GM12878 (cell line): ENCODE measurements at regions of chr17 and their contacts with region 1.

Region 1: DNA sequence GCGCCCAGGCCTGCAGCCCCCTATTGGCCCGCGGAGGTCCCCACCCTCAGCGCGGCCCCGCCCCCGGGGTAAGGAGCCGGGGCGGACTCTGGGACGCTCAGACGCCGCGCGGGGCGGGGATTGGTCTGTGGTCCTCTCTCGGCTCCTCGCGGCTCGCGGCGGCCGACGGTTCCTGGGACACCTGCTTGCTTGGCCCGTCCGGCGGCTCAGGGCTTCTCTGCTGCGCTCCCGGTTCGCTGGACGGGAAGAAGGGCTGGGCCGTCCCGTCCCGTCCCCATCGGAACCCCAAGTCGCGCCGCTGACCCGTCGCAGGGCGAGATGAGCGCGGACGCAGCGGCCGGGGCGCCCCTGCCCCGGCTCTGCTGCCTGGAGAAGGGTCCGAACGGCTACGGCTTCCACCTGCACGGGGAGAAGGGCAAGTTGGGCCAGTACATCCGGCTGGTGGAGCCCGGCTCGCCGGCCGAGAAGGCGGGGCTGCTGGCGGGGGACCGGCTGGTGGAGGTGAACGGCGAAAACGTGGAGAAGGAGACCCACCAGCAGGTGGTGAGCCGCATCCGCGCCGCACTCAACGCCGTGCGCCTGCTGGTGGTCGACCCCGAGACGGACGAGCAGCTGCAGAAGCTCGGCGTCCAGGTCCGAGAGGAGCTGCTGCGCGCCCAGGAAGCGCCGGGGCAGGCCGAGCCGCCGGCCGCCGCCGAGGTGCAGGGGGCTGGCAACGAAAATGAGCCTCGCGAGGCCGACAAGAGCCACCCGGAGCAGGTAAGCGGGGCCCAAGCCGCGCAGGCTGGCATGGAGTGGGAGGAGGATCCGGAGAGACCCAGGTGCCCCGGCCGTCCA is at the start of gene NHERF1:
- DNase-seq: peak; percentile 60
- ATAC-seq: peak; percentile 96
- H3K4me3 ChIP-seq: peak within 1 kb of the TSS; percentile 96
- H3K27ac ChIP-seq: peak within 1 kb of the TSS; percentile 64
- H3K4me1 ChIP-seq: peaks cover 6% of the 10 kb centered on the region
- H3K27me3 ChIP-seq: no peaks in the 10 kb centered on the region
- CTCF ChIP-seq: peak; percentile 10 to 19 (median 14); a peak in 1 of 6 replicates
- EP300 ChIP-seq: no peak
- POLR2A ChIP-seq: peak; percentile 99
- RAD21 ChIP-seq: no peak
- polyA plus RNA-seq, gene NHERF1: 13.4 to 14.3 TPM

Region 2: DNA sequence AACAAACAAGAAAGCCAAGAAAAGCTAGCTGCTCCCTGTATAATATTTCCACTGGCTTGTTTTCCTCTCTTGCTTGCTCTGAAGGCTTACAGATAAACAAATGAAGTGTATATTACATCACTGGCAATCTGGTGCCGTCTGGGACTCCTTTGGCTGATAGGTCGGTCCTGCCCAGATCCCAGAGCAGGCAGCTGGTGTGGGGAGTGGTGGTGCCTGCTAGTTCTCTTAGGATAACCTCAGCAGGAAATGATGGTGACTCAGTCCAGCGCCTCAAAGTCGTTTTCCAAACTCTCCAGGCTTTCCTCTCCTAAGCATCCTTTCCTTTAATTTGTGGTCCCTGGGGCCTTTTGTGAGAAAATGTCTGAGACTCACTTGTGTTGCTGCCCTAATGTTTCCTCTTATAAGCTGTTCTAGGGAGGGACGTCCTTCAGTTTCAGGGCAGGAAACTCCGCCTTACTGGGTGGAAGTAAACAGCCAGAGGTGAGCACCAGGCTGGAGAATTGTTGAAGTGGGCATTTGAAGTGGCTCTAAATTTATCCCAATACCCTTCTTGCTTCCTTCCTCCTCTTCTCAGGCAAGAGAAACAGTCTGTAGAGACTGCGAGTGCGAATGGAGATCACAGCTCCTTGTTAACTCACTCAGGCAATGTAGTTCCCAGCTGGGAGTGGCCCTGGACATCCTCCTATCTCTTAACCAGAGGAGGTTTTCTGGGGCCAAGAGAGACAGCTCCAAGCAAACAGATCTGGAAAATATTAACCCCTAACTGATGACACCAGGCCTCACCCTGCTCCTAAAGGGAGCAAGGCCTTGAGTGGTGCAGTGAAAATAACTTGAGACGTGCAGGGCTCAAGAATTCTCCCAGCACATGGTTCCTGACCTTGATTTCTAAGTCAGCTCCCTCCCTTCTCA is 70.9 kb before region 1 on chr17:
- CTCF ChIA-PET with region 1: no interaction called
- POLR2A ChIA-PET with region 1: no interaction called
- RAD21 ChIA-PET with region 1: no interaction called
- SMC1A ChIA-PET with region 1: no interaction called
- in situ Hi-C with region 1: no loop called
- intact Hi-C with region 1: no loop called
- DNase-seq: no peak
- ATAC-seq: no peak
- H3K4me3 ChIP-seq: no peak overlapping the region
- H3K27ac ChIP-seq: no peak overlapping the region
- H3K4me1 ChIP-seq: 0 out of 2 replicates have a peak, but pooled peaks cover 3% of the 10 kb centered on the region
- H3K27me3 ChIP-seq: peaks cover 0 to 4% of the 10 kb centered on the region in 2 experiments; a peak in 2 of 4 replicates
- CTCF ChIP-seq: no peak
- EP300 ChIP-seq: no peak
- POLR2A ChIP-seq: no peak
- RAD21 ChIP-seq: no peak

Region 3: GRCh38 chr17:74759243-74759801 is 10.6 kb after region 1 on chr17:
- CTCF ChIA-PET with region 1: interaction called, 33 read pairs
- POLR2A ChIA-PET with region 1: interaction called, 16 read pairs
- RAD21 ChIA-PET with region 1: interaction called, 11 read pairs
- SMC1A ChIA-PET with region 1: interaction called, 10 read pairs
- in situ Hi-C with region 1: no loop called
- intact Hi-C with region 1: no loop called
- DNase-seq: no peak
- ATAC-seq: peak; percentile 90
- H3K4me3 ChIP-seq: no peak overlapping the region
- H3K27ac ChIP-seq: peak overlapping the region; percentile 1
- H3K4me1 ChIP-seq: peaks cover 21% of the 10 kb centered on the region
- H3K27me3 ChIP-seq: no peaks in the 10 kb centered on the region
- CTCF ChIP-seq: peak; percentile 16 to 32 (median 30); a peak in 3 of 6 replicates
- EP300 ChIP-seq: no peak
- POLR2A ChIP-seq: no peak
- RAD21 ChIP-seq: peak; percentile 28

Region 4: GRCh38 chr17:74770498-74771318 is 22.0 kb after region 1 on chr17:
- CTCF ChIA-PET with region 1: interaction called, 60 read pairs
- POLR2A ChIA-PET with region 1: interaction called, 14 read pairs
- RAD21 ChIA-PET with region 1: interaction called, 30 read pairs
- SMC1A ChIA-PET with region 1: interaction called, 11 read pairs
- in situ Hi-C with region 1: no loop called
- intact Hi-C with region 1: no loop called
- DNase-seq: no peak
- ATAC-seq: peak; percentile 90
- H3K4me3 ChIP-seq: no peak overlapping the region
- H3K27ac ChIP-seq: no peak overlapping the region
- H3K4me1 ChIP-seq: 0 out of 2 replicates have a peak, but pooled peaks cover 3% of the 10 kb centered on the region
- H3K27me3 ChIP-seq: no peaks in the 10 kb centered on the region
- CTCF ChIP-seq: peak; percentile 81 to 85 (median 82)
- EP300 ChIP-seq: no peak
- POLR2A ChIP-seq: peak; percentile 33; the same call in 1 of the 2 replicates
- RAD21 ChIP-seq: peak; percentile 88

Region 5: DNA sequence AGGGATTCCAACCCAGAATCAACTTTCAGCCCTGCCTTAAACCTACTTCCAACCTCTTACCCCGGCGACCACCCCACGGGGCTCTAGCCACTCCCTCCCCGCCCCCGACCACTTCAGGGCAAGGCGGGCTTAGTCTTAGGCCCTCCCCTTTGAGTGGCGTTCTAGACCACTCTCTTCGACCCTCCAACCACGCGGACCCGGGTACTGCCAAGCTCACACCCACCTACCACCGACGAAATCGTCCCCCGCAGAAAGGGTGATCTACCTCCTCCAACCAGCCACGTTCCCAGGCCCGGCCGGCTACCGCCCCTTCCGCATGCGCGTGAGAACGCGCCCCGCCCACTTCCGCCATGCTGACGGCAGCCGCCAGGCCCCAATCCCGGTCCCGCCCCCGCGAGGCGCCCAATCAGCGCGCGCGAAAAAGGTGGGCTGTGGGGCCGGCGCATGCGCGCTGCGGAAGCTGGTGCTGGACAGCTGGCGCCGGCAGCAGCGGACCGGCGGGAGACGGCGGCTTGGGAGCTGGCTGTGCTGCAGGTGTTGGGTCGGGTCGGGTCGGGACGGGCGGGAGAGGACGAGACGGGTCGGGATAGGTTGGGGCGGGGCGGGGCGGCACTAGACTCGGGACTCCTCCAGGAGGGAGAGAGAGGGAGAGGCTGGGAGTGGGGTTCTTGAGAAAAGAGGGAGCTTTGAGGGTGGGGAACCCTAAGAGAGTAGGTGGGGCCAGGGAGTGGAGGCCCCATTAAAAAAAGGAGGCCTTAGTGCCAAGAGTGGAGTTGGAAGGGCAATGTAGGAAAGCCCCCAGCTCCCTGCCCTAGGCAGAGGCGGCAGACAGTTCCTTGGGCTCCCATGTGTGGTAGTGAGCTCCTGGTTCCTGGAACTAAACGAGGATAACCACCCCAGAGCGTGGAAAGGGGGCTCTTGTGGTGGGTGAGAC is 27.6 kb after region 1 on chr17 and contains the start of gene NAT9:
- CTCF ChIA-PET with region 1: interaction called, 60 read pairs
- POLR2A ChIA-PET with region 1: interaction called, 14 read pairs
- RAD21 ChIA-PET with region 1: interaction called, 30 read pairs
- SMC1A ChIA-PET with region 1: interaction called, 13 read pairs
- in situ Hi-C with region 1: no loop called
- intact Hi-C with region 1: loop called (anchors 2 kb)
- DNase-seq: peak; percentile 82
- ATAC-seq: peak; percentile 91
- H3K4me3 ChIP-seq: peak within 1 kb of the TSS; percentile 73
- H3K27ac ChIP-seq: peak within 1 kb of the TSS; percentile 59
- H3K4me1 ChIP-seq: peaks cover 28% of the 10 kb centered on the region
- H3K27me3 ChIP-seq: no peaks in the 10 kb centered on the region
- CTCF ChIP-seq: no peak
- EP300 ChIP-seq: no peak
- POLR2A ChIP-seq: peak; percentile 89
- RAD21 ChIP-seq: no peak
- polyA plus RNA-seq, gene NAT9: 3.5 to 4.5 TPM

Region 6: GRCh38 chr17:74790161-74791054 is 41.7 kb after region 1 on chr17:
- CTCF ChIA-PET with region 1: interaction called, 17 read pairs
- POLR2A ChIA-PET with region 1: interaction called, 6 read pairs
- RAD21 ChIA-PET with region 1: interaction called, 6 read pairs
- SMC1A ChIA-PET with region 1: interaction called, 4 read pairs
- in situ Hi-C with region 1: no loop called
- intact Hi-C with region 1: no loop called
- DNase-seq: no peak
- ATAC-seq: no peak
- H3K4me3 ChIP-seq: no peak overlapping the region
- H3K27ac ChIP-seq: no peak overlapping the region
- H3K4me1 ChIP-seq: peaks cover 1% of the 10 kb centered on the region
- H3K27me3 ChIP-seq: no peaks in the 10 kb centered on the region
- CTCF ChIP-seq: no peak
- EP300 ChIP-seq: no peak
- POLR2A ChIP-seq: no peak
- RAD21 ChIP-seq: no peak

Region 7: GRCh38 chr17:74864866-74865395 is 116.2 kb after region 1 on chr17:
- CTCF ChIA-PET with region 1: interaction called, 98 read pairs
- POLR2A ChIA-PET with region 1: interaction called, 5 read pairs
- RAD21 ChIA-PET with region 1: interaction called, 16 read pairs
- SMC1A ChIA-PET with region 1: interaction called, 13 read pairs
- in situ Hi-C with region 1: loop called (anchors 5 kb)
- intact Hi-C with region 1: loop called (anchors 1 kb)
- DNase-seq: no peak
- ATAC-seq: peak; percentile 81
- H3K4me3 ChIP-seq: no peak overlapping the region
- H3K27ac ChIP-seq: no peak overlapping the region
- H3K4me1 ChIP-seq: peaks cover 4% of the 10 kb centered on the region; the same call in 1 of the 2 replicates
- H3K27me3 ChIP-seq: peaks cover 5 to 8% of the 10 kb centered on the region in 2 experiments
- CTCF ChIP-seq: peak; percentile 91 to 98 (median 97)
- EP300 ChIP-seq: no peak
- POLR2A ChIP-seq: no peak
- RAD21 ChIP-seq: peak; percentile 71